ENCODE measurements at regions of chr3 and their contacts with region 1.

Region 1: DNA sequence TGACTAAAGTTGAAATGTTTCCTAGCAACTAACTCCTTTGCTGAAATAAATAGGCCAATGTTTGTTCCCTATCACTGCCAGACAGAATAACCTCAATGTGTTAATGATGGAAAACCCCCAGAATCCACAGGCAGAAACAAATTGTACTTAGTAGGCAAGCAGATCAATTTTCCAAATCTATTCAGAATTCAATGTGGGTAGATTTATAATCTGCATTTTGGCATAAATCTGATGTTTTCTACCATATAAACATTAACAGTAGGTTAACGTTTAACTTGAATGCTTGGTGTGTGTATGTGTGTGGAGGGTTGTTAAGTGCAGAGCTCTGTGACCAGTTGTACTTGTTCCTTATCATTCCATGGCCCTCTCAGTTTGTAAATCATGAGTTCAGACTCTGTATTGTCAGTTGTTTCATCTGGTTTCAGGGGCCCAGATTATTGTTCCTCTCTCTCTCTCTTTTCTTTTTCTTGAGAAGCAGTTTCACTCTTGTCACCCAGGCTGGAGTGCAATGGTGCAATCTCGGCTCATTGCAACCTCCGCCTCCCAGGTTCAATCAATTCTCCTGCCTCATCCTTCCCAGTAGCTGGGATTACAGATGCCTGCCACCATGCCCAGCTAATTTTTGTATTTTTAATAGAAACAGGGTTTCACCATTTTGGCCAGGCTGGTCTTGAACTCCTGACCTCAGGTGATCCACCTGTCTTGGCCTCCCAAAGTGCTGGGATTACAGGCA is 32.8 kb downstream of the PLSCR1 start:
- DNase-seq: no peak
- H3K4me3 ChIP-seq: no peak overlapping the region
- H3K27ac ChIP-seq: no peak overlapping the region
- H3K27me3 ChIP-seq: no peaks in the 10 kb centered on the region
- CTCF ChIP-seq: no peak

Region 2: GRCh38 chr3:146200461-146201220 is 310.9 kb before region 1 on chr3:
- CTCF ChIA-PET with region 1: interaction called, 10 read pairs
- POLR2A ChIA-PET with region 1: no interaction called
- DNase-seq: no peak
- H3K4me3 ChIP-seq: no peak overlapping the region
- H3K27ac ChIP-seq: no peak overlapping the region
- H3K27me3 ChIP-seq: no peaks in the 10 kb centered on the region
- CTCF ChIP-seq: no peak

Region 3: GRCh38 chr3:146233487-146233886 is 278.1 kb before region 1 on chr3:
- CTCF ChIA-PET with region 1: no interaction called
- POLR2A ChIA-PET with region 1: no interaction called
- DNase-seq: no peak
- H3K4me3 ChIP-seq: no peak overlapping the region
- H3K27ac ChIP-seq: no peak overlapping the region
- H3K27me3 ChIP-seq: no peaks in the 10 kb centered on the region
- CTCF ChIP-seq: no peak

Region 4: DNA sequence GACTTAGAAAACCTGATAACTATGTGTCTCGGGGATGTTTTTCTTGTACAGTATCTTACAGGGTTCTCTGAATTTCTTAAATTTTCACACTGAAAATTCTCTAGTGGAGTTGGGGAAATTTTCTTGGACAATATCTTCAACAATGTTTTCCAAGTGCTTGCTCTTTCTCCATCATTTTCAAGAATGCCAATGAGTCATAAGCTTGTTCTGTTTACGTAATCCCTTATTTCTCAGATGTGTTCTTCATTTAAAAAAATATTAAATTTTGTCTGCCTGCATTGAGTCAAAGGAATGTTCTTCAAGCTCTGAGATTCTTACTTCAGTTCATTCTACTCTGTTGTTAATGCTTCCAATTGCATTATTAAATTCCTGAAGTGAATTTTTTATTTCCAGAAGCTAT is 20.3 kb before region 1 on chr3:
- CTCF ChIA-PET with region 1: no interaction called
- POLR2A ChIA-PET with region 1: no interaction called
- DNase-seq: no peak
- H3K4me3 ChIP-seq: no peak overlapping the region
- H3K27ac ChIP-seq: no peak overlapping the region
- H3K27me3 ChIP-seq: no peaks in the 10 kb centered on the region
- CTCF ChIP-seq: no peak

Region 5: DNA sequence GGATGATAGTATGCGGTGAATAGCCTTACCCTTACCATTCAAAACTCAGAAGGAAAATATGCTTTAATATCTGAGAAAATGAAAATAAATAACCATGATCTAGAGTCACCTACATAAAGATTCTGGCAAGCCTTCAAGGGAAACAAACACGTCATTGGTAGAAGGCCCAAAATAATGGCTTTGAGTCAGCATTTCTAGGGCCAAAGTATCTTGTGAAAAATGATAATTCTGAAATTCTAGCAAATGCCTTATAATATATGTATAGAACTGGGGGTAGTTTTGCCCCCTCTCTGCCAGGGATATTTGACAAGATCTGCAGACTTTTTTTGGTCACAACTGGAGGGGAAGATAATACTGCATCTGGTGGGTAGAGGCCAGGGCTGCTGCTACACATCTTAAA is 17.5 kb after region 1 on chr3:
- CTCF ChIA-PET with region 1: no interaction called
- POLR2A ChIA-PET with region 1: no interaction called
- DNase-seq: peak; percentile 8
- H3K4me3 ChIP-seq: no peak overlapping the region
- H3K27ac ChIP-seq: no peak overlapping the region
- H3K27me3 ChIP-seq: no peaks in the 10 kb centered on the region
- CTCF ChIP-seq: no peak